ENCODE measurements at regions of chr6 and their contacts with region 1.

Region 1: GRCh38 chr6:31541658-31542521 is at the start of gene DDX39B:
- DNase-seq: peak; percentile 96 to 98 (median 97)
- H3K4me3 ChIP-seq: peak within 1 kb of the TSS; percentile 63 to 95 (median 85)
- H3K4me3 Mint-ChIP-seq: peak within 1 kb of the TSS; percentile 95 to 96
- H3K27ac ChIP-seq: peak within 1 kb of the TSS; percentile 96 to 97
- H3K27ac Mint-ChIP-seq: peak within 1 kb of the TSS; percentile 98 to 100 (median 99)
- H3K4me1 ChIP-seq: peaks cover 34 to 45% of the 10 kb centered on the region in 2 donors
- H3K4me1 Mint-ChIP-seq: peaks cover 40% of the 10 kb centered on the region
- H3K27me3 ChIP-seq: no peaks in the 10 kb centered on the region
- H3K27me3 Mint-ChIP-seq: no peaks in the 10 kb centered on the region
- CTCF ChIP-seq: no peak
- polyA plus RNA-seq, gene DDX39B: 64.1 to 1,059 (median 67.8) TPM

Region 2: DNA sequence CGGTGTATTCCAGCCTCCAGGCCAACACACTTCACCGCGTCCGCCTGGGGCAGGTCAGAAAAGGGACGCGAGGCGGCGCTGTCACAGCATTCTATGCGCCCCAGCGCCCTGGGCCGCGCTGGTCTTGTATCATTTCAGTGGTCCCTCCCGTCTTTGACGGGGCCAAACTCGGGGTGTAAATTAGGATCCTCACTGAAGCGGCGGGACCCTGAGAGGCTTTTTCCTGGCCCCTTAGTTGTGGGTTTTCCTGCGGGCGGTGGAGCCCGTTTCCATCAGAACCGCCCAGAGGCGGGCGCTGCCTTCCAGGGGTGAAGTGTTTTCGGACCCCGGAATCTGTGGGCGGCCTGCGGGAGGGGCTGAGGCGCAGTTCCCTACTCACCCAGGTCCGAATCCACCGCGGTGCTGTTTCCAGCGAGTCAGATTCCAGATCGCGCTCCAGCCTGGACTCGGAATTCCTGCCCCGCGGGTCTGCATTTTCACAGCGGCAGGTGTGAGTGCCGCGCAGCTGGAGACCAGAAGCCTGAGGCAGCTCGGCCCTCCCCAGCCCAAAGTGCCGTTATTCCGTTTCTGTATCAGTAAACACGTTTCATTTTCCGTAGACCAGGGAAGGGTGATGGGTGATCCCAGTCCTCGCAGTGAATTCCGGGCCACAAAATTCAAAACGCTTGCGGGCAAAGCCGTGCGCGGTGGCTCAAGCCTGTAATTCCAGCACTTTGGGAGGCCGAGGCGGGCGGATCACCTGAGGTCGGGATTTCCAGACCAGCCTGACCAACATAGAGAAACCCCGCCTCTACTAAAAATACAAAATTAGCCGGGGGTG is 47.8 kb before region 1 on chr6:
- intact Hi-C with region 1: loop called (anchors 5 to 10 kb)
- DNase-seq: peak; percentile 68 to 77 (median 77)
- H3K4me3 ChIP-seq: peak overlapping the region; percentile 81 to 98 (median 87)
- H3K4me3 Mint-ChIP-seq: peak overlapping the region; percentile 94 to 95
- H3K27ac ChIP-seq: peak overlapping the region; percentile 82 to 83
- H3K27ac Mint-ChIP-seq: peak overlapping the region; percentile 87 to 96 (median 94)
- H3K4me1 ChIP-seq: peaks cover 51 to 62% of the 10 kb centered on the region in 2 donors
- H3K4me1 Mint-ChIP-seq: peaks cover 56% of the 10 kb centered on the region
- H3K27me3 ChIP-seq: no peaks in the 10 kb centered on the region
- H3K27me3 Mint-ChIP-seq: peaks cover 0 to 2% (median 0%) of the 10 kb centered on the region in 3 donors
- CTCF ChIP-seq: peak; percentile 92

Region 3: DNA sequence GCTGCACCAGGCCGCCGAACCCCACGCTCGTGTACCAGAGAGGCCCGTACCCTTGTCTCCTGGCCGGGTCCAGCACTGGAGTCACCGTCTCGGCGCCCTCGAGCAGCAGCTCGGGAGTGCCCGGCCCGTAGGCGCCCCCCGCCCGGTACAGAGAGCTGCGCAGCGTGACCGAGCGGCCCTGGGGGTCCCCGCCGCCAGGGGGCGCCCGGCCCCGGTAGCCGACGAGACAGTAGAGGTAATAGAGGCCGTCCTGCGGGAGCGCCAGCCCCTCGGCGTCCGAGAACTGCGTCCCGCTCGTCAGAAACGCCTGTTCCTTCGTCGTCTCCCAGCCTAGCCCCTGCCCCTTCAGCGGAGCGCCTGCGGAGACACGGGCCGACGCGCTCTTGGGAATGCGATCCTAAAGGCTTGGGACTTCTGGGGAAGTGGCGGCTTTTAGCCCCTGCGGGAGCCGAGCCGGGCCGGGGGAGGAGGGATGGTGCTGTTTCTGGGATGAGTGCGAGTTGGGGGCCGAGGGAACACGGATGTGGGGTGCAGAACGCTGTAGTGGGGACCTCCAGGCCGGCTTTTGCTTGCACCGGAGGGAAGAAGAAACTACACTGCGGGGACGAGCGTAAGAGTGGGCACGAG is 39.0 kb after region 1 on chr6:
- intact Hi-C with region 1: no loop called
- DNase-seq: peak; percentile 77 to 83 (median 79)
- H3K4me3 ChIP-seq: peak overlapping the region; percentile 83 to 94 (median 84)
- H3K4me3 Mint-ChIP-seq: peak overlapping the region; percentile 95 to 99
- H3K27ac ChIP-seq: peak overlapping the region; percentile 66 to 75
- H3K27ac Mint-ChIP-seq: peak overlapping the region; percentile 86 to 96 (median 93)
- H3K4me1 ChIP-seq: peaks cover 83 to 94% of the 10 kb centered on the region in 2 donors
- H3K4me1 Mint-ChIP-seq: peaks cover 88% of the 10 kb centered on the region
- H3K27me3 ChIP-seq: no peaks in the 10 kb centered on the region
- H3K27me3 Mint-ChIP-seq: peaks cover 0 to 1% (median 1%) of the 10 kb centered on the region in 3 donors
- CTCF ChIP-seq: peak; percentile 97

Region 4: GRCh38 chr6:31739639-31740396 is 197.9 kb after region 1 on chr6 and contains the start of gene MSH5:
- intact Hi-C with region 1: loop called in 1 of 2 experiments (anchors 10 kb)
- DNase-seq: peak; percentile 97 to 100 (median 98)
- H3K4me3 ChIP-seq: peak within 1 kb of the TSS; percentile 58 to 100 (median 71)
- H3K4me3 Mint-ChIP-seq: peak within 1 kb of the TSS; percentile 92 to 98
- H3K27ac ChIP-seq: peak within 1 kb of the TSS; percentile 91 to 99
- H3K27ac Mint-ChIP-seq: peak within 1 kb of the TSS; percentile 95 to 100 (median 99)
- H3K4me1 ChIP-seq: peaks cover 42 to 54% of the 10 kb centered on the region in 2 donors
- H3K4me1 Mint-ChIP-seq: peaks cover 50% of the 10 kb centered on the region
- H3K27me3 ChIP-seq: no peaks in the 10 kb centered on the region
- H3K27me3 Mint-ChIP-seq: peaks cover 0 to 2% (median 2%) of the 10 kb centered on the region in 3 donors
- CTCF ChIP-seq: no peak
- polyA plus RNA-seq, gene MSH5: 0.58 to 31.2 (median 1.9) TPM

Region 5: DNA sequence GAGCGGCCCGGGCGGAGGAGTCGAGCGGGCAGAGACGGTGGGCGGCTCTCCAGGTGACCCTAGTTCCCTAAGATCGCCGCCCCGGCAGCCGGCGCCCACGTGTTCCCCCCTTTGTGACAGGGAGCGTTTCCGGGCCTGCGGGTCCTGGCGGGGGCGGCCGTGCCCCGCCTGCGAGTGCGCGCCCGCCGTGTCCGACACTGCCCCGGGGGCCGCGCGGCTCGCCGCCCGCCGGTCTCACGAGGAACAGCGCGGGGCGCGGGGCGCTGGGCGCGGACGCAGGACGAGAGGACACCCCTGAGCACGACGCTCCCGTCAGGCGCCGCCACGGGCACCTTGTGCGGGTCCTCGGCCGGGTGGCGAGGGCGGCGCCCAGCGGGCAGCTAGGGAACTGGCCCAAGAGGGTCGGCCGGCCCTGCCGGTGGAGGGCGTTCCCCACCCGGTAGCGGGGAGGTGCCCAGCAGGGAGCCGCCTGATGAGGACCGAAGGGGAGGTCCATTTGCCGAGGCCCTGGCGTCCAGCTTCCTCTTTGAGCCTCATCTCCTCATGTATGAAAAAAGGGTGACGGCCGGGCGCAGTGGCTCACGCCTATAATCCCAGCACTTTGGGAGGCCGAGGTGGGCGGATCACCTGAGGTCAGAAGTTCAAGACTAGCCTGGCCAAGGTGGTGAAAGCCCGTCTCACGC is 253.9 kb after region 1 on chr6 and contains the start of gene VARS1:
- intact Hi-C with region 1: no loop called
- DNase-seq: peak; percentile 96 to 97 (median 97)
- H3K4me3 ChIP-seq: peak within 1 kb of the TSS; percentile 61 to 98 (median 66)
- H3K4me3 Mint-ChIP-seq: peak within 1 kb of the TSS; percentile 99
- H3K27ac ChIP-seq: peak within 1 kb of the TSS; percentile 72 to 95
- H3K27ac Mint-ChIP-seq: peak within 1 kb of the TSS; percentile 97 to 99 (median 99)
- H3K4me1 ChIP-seq: peaks cover 24 to 30% of the 10 kb centered on the region in 2 donors
- H3K4me1 Mint-ChIP-seq: peaks cover 25% of the 10 kb centered on the region
- H3K27me3 ChIP-seq: no peaks in the 10 kb centered on the region
- H3K27me3 Mint-ChIP-seq: peaks cover 0 to 2% (median 0%) of the 10 kb centered on the region in 3 donors
- CTCF ChIP-seq: peak; percentile 78
- polyA plus RNA-seq, gene VARS1: 22.2 to 28.9 (median 27.3) TPM

Region 6: GRCh38 chr6:31834434-31835198 is 292.7 kb after region 1 on chr6:
- intact Hi-C with region 1: loop called in 1 of 2 experiments (anchors 10 kb)
- DNase-seq: peak; percentile 75 to 81 (median 77)
- H3K4me3 ChIP-seq: peak overlapping the region; percentile 83 to 89 (median 86)
- H3K4me3 Mint-ChIP-seq: peak overlapping the region; percentile 98 to 99
- H3K27ac ChIP-seq: peak overlapping the region; percentile 87 to 92
- H3K27ac Mint-ChIP-seq: peak overlapping the region; percentile 97 to 100 (median 98)
- H3K4me1 ChIP-seq: peaks cover 70 to 82% of the 10 kb centered on the region in 2 donors
- H3K4me1 Mint-ChIP-seq: peaks cover 56% of the 10 kb centered on the region
- H3K27me3 ChIP-seq: no peaks in the 10 kb centered on the region
- H3K27me3 Mint-ChIP-seq: no peaks in the 10 kb centered on the region
- CTCF ChIP-seq: no peak

Region 7: DNA sequence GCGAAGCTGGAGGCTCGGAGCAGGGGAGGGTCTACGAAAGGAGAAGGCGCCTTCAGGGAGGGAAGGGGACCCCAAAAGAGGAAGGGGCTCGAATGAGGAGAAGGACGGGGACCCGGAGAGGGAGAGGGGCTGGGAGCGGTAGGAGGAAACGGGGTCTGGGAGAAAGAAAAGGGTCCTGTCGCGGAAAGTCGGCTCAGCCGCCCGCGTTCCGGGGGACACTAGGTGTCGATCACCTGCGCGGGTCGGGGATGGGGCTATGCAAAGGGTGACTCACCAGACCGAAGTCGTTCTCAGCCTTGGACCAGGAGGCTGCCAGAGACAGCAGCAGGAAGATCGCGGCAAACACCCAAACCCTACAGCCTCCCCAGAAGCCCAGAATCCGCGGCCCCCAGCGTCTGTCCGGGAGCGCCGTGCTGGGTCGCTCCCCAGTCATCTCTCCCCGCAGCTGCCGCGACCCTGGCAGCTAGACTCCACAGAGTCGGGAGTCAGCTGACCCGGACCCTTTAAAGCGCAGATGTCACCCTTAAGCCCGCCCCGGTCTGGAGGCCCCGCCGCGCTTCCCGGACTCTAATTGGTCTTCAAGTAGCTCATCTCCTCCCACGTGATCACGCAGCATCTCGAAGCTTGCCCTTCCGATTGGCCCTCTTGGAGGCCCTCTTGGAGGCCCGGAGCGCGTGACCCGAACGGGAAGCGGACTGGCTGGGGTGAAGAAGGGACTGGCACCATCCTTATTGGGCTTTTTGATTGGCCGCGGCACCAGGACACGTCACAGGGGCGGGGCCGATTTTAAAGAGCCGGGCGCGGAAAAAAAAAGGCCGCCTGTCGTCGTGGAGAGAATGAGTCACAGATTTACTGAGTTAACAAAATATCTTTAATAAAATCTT is 320.7 kb after region 1 on chr6 and contains the start of gene NEU1:
- intact Hi-C with region 1: loop called in 1 of 2 experiments (anchors 10 kb)
- DNase-seq: peak; percentile 100
- H3K4me3 ChIP-seq: peak within 1 kb of the TSS; percentile 69 to 97 (median 85)
- H3K4me3 Mint-ChIP-seq: peak within 1 kb of the TSS; percentile 94 to 98
- H3K27ac ChIP-seq: peak within 1 kb of the TSS; percentile 72 to 89
- H3K27ac Mint-ChIP-seq: peak within 1 kb of the TSS; percentile 93 to 98 (median 96)
- H3K4me1 ChIP-seq: peaks cover 22 to 28% of the 10 kb centered on the region in 2 donors
- H3K4me1 Mint-ChIP-seq: peaks cover 23% of the 10 kb centered on the region
- H3K27me3 ChIP-seq: no peaks in the 10 kb centered on the region
- H3K27me3 Mint-ChIP-seq: peaks cover 0 to 2% (median 2%) of the 10 kb centered on the region in 3 donors
- CTCF ChIP-seq: no peak
- polyA plus RNA-seq, gene NEU1: 70.2 to 89.5 (median 81.8) TPM

Region 8: GRCh38 chr6:31958741-31959739 is 417.1 kb after region 1 on chr6 and contains the starts of genes NELFE and SKIC2:
- intact Hi-C with region 1: loop called in 1 of 2 experiments (anchors 10 kb)
- DNase-seq: peak; percentile 99
- H3K4me3 ChIP-seq: peak within 1 kb of the TSS; percentile 91 to 100 (median 93)
- H3K4me3 Mint-ChIP-seq: peak within 1 kb of the TSS; percentile 91 to 97
- H3K27ac ChIP-seq: peak within 1 kb of the TSS; percentile 79 to 99
- H3K27ac Mint-ChIP-seq: peak within 1 kb of the TSS; percentile 97 to 99 (median 99)
- H3K4me1 ChIP-seq: peaks cover 17 to 22% of the 10 kb centered on the region in 2 donors
- H3K4me1 Mint-ChIP-seq: peaks cover 22% of the 10 kb centered on the region
- H3K27me3 ChIP-seq: no peaks in the 10 kb centered on the region
- H3K27me3 Mint-ChIP-seq: no peaks in the 10 kb centered on the region
- CTCF ChIP-seq: no peak
- polyA plus RNA-seq, gene NELFE: 48.8 to 74.4 (median 61.4) TPM
- polyA plus RNA-seq, gene SKIC2: 13.2 to 72.1 (median 13.2) TPM